CD4-positive, alpha-beta memory T cell (primary cell): ENCODE measurements at regions of chr18 and their contacts with region 1.

Region 1: DNA sequence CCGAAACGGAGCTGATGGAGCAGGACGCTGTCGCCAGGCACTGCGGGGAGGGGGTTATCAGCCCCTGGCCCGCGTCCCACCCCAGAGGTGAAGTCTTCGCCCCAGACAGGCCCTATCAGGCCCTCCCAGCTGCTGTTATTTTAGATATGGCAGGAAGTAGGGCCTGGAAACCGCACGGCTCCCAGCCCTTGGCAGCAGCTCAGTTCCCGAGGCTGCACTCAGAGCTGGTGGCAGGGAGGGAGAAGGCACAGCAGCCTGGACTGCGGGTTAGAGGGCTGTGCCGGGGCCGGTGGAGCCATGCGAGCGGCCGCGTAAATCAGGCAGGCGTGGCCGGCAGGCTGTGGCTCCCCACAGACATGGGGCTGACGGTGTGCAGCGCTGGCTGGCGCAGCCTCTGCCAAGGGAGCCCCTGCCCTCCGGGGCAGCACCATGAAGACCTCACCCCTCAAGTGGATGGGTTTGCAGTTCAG is 111.4 kb downstream of the NFATC1 start:
- DNase-seq: peak in 3 of 5 donors; percentile 23 to 48 (median 27)
- H3K4me3 ChIP-seq: no peak overlapping the region
- H3K4me3 Mint-ChIP-seq: peak overlapping the region in 7 of 8 donors; percentile 38 to 78 (median 68)
- H3K27ac ChIP-seq: peak overlapping the region; percentile 36
- H3K27ac Mint-ChIP-seq: peak overlapping the region; percentile 87 to 92 (median 91)
- H3K4me1 ChIP-seq: peaks cover 54% of the 10 kb centered on the region
- H3K4me1 Mint-ChIP-seq: peaks cover 35 to 68% (median 51%) of the 10 kb centered on the region in 4 donors
- H3K27me3 ChIP-seq: no peaks in the 10 kb centered on the region
- H3K27me3 Mint-ChIP-seq: no peaks in the 10 kb centered on the region

Region 2: DNA sequence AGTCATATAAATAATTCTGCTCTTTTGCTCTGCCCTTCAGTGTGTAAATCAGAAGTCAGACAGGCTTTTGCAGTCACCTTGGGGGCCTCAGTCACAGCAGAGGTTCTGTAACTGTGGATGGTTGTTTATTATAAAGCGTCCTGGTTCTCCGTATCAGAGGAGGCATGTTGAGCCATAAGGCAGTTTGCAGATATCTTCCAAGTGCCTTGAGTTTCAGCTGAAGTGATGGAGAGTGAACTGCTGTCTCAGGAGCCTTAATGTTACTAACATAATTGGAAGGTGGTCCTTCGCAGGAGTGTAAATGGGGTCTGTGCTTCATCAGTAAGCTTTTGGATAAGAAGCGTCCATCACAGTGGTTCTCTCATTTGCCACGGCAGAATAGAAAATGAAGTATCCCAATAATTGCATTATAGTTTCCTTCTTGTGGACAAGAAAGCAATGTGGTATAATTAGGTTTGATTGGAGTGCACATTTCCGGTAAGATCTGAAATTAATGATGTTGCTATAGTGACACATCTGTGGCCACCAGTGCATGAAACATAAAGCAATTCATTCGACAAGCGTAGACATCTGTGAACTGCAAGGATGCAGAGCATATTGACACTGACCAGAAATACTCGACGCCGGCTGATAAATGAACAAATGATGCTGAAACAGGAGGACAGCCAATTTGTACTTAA is 223.8 kb before region 1 on chr18:
- CTCF ChIA-PET with region 1: no interaction called
- POLR2A ChIA-PET with region 1: no interaction called
- intact Hi-C with region 1: no loop called
- DNase-seq: no peak
- H3K4me3 ChIP-seq: no peak overlapping the region
- H3K4me3 Mint-ChIP-seq: peak overlapping the region in 1 of 8 donors; percentile 15
- H3K27ac ChIP-seq: no peak overlapping the region
- H3K27ac Mint-ChIP-seq: peak overlapping the region in 1 of 7 donors; percentile 23
- H3K4me1 ChIP-seq: no peaks in the 10 kb centered on the region
- H3K4me1 Mint-ChIP-seq: no peaks in the 10 kb centered on the region
- H3K27me3 ChIP-seq: no peaks in the 10 kb centered on the region
- H3K27me3 Mint-ChIP-seq: no peaks in the 10 kb centered on the region

Region 3: DNA sequence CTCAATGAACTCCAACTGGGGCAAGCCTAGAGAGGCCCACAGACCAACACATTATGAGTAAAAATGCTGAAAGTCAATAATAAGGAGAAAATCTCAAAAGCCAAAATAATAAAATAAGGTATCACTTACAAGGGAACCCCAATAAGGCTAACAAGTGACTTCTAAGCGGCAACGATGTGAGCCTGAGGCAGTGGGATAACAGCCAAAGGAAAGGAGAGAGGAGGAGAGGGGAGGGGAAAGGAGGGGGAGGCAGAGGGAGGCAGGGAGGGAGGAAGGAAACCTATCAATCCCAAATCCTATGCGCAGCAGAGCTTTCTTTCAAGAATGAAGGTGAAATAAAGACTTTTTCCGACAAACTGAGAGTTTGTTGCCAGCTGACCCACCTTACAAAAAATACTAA is 117.4 kb before region 1 on chr18:
- CTCF ChIA-PET with region 1: no interaction called
- POLR2A ChIA-PET with region 1: no interaction called
- intact Hi-C with region 1: no loop called
- DNase-seq: no peak
- H3K4me3 ChIP-seq: no peak overlapping the region
- H3K4me3 Mint-ChIP-seq: no peak overlapping the region
- H3K27ac ChIP-seq: no peak overlapping the region
- H3K27ac Mint-ChIP-seq: no peak overlapping the region
- H3K4me1 ChIP-seq: peaks cover 14% of the 10 kb centered on the region
- H3K4me1 Mint-ChIP-seq: peaks cover 14 to 23% (median 14%) of the 10 kb centered on the region in 4 donors
- H3K27me3 ChIP-seq: no peaks in the 10 kb centered on the region
- H3K27me3 Mint-ChIP-seq: peaks cover 4% of the 10 kb centered on the region in 2 donors

Region 4: GRCh38 chr18:79517341-79517740 is 10.2 kb after region 1 on chr18:
- CTCF ChIA-PET with region 1: interaction called, 5 read pairs
- POLR2A ChIA-PET with region 1: interaction called, 17 read pairs
- intact Hi-C with region 1: no loop called
- DNase-seq: peak in 3 of 5 donors; percentile 34 to 43 (median 42)
- H3K4me3 ChIP-seq: no peak overlapping the region
- H3K4me3 Mint-ChIP-seq: peak overlapping the region; percentile 64 to 84 (median 80)
- H3K27ac ChIP-seq: peak overlapping the region; percentile 45
- H3K27ac Mint-ChIP-seq: peak overlapping the region; percentile 89 to 99 (median 95)
- H3K4me1 ChIP-seq: peaks cover 65% of the 10 kb centered on the region
- H3K4me1 Mint-ChIP-seq: peaks cover 46 to 75% (median 60%) of the 10 kb centered on the region in 4 donors
- H3K27me3 ChIP-seq: no peaks in the 10 kb centered on the region
- H3K27me3 Mint-ChIP-seq: no peaks in the 10 kb centered on the region